Tibial artery (tissue), 4 donors: ENCODE measurements at regions of chr11 and their contacts with region 1.

Region 1: DNA sequence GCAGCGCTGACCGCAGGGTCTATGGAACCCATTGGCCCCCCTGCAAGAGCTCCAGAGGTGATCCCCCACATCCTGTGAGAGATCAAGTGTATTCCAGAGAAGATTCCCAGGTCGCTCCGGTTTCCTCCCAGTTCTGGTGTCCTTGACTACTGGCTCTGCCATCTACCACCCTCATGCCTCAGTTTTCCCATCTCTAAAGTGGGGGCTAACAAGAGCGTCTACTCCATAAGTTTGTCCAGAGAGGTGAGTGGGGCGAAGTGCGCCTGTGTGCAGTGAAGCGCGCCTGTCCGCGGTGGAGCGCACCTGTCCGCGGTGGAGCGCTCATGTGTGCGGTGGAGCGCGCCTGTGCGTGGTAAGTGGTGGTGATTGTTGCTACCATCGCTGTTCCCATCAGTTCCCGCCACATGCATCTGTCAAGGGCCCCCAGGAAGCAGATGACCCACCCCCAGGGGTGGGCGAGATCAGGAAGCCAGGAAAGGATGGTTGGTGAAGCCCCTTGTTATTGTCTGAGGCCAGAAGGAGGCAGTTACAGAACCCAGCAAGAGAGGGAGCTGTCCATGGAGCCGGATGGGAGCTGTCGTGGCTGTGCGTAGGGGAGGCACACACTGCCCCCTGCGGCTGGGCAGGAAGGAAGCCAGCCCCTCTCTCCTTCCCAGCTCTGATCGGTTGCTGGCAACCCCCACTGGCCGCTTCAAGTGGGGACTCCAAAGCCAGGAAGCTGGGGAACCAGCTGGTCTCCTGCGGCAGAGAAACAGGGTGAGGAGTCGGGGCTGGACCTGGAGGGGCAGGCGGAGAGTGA is 73.2 kb upstream of the FGF3 start:
- DNase-seq: no peak
- H3K4me3 ChIP-seq: no peak overlapping the region
- H3K27ac ChIP-seq: no peak overlapping the region
- H3K4me1 ChIP-seq: peaks cover 0 to 12% (median 5%) of the 10 kb centered on the region in 4 donors
- H3K27me3 ChIP-seq: peaks cover 0 to 31% of the 10 kb centered on the region in 2 donors
- CTCF ChIP-seq: no peak

Region 2: DNA sequence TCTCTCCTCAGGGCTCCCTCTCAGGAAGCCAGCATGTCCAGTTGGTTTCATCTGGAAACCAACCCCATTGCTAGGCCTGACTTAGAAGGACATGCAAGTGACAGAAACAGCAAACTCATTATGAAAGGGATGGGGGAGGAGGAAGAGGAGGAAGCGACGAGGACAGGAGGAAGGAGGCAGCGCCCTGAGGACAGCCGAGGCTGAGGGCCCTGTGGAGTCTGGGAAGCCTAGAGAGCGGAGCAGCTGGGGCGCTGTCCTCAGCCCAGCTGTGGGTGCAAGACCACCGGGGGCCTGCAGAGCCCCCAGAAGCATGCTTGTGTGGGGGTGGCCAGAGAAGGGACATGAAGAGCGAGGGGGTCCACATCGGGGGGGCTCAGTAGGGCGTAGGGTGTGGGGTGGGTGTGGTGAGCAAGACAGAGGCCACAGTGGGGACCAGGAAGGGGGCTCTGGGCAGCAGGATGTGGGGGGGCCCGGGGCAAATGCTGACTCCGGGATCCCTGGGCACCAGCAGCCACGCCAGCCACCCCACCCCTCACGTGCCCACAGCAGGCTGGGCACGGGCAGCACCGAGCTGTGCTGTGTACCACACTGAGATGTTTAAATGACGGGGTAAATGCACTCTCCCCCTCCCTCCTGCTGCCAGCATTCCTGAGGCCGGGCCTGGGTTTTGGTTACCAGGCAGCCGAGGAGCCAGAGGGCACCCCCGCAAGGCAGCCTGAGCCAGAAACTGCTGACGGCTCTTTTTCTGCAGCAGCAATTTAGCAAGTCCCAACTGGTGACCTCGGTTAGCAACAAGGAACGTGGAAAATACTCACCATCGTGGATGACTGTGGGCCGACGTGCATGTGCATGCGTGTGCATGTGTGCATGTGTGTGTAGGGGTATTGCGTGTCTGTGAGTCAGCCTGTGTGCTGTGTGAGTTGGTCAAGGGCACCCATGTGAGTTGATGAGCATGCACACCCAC is 493.6 kb before region 1 on chr11:
- intact Hi-C with region 1: no loop called
- DNase-seq: peak in 1 of 2 donors; percentile 42
- H3K4me3 ChIP-seq: no peak overlapping the region
- H3K27ac ChIP-seq: no peak overlapping the region
- H3K4me1 ChIP-seq: peaks cover 0 to 11% (median 8%) of the 10 kb centered on the region in 4 donors
- H3K27me3 ChIP-seq: no peaks in the 10 kb centered on the region
- CTCF ChIP-seq: no peak

Region 3: DNA sequence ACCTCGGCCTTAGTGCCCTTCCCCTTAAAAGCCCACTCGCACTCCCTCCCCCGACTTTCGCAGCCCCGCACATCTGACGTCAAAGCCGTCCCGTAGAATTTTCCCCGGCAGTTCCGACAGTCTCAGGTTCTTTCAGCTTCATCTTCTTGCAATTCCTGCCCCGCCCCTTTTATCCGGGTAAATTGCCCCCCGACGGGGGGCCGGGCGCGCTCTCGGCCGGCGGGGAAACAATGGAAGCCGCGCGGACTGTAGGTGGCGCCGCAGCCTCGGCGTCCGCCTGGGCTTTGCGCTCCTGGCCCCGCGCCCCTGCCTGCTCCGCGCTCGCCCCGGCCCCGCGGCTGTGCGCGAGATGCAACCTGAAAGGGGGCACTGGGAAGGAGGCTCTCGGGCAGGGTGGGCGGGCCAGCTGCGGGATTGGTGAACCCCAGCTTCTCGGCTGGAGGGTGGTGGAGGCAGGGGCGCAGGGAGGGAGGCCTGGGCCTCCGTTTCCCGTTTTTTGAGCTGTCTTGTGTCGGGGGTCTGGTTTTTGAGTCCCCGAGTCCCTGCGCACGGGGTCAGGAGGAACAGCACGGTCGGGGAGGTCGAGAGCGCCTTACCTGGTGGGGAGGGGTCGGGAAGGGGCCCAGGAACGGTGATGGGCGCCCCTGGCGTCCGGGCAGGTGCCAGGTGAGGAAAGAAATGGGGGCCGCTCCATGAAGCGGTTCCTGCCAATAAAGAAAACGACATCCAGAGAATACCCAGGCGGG is 187.8 kb before region 1 on chr11:
- intact Hi-C with region 1: loop called (anchors 5 kb)
- DNase-seq: no peak
- H3K4me3 ChIP-seq: peak overlapping the region in 1 of 2 donors; percentile 28
- H3K27ac ChIP-seq: no peak overlapping the region
- H3K4me1 ChIP-seq: peaks cover 0 to 29% (median 24%) of the 10 kb centered on the region in 4 donors
- H3K27me3 ChIP-seq: peaks cover 0 to 78% of the 10 kb centered on the region in 2 donors
- CTCF ChIP-seq: peak in 1 of 2 experiments; percentile 30